ENCODE measurements at regions of chr11 and their contacts with region 1.

Region 1: DNA sequence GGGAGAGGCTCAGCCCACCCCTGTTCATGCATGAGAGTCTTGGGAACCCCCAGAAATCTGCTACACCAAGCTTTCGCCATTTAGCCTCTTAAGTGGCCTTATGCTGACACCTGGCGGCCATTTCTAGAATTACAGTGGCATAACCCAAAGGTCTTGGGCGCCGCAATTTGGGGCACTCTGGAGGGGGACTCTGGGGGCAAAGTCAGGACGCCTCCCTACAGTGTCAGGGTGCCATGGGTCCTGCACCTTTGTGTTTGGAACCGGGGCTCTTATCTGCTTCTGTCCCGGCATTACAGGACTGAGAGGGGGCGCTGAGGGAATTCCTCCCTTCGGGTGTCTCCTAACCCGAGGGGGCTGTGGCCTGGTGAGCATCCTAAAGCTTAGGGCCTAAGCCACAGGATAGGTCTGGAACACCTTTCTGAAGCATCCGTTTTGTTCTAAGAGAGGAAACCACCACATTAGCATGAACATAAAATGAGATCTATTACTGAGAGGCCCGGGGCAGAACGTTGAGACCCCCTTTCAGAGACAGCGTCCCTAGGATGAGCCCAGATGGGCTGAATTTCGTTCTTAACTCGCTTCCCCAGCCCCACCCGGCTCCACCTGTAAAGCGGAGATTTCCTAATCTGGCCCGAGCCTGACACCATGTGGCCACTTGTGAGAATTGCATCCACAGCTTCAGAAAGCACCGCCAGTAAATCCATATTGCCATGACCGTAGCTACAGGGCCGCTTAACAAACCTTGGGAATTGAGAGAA is 9.3 kb downstream of the INS start:
- DNase-seq: peak; percentile 57 to 90 (median 76)
- ATAC-seq: peak; percentile 70 to 86 (median 81)
- H3K4me3 ChIP-seq: peak overlapping the region in 1 of 2 donors; percentile 9
- H3K4me3 Mint-ChIP-seq: peak overlapping the region; percentile 17 to 64 (median 21)
- H3K27ac ChIP-seq: no peak overlapping the region
- H3K27ac Mint-ChIP-seq: no peak overlapping the region
- H3K4me1 ChIP-seq: peaks cover 0 to 15% of the 10 kb centered on the region in 2 experiments
- H3K4me1 Mint-ChIP-seq: peaks cover 5 to 9% (median 6%) of the 10 kb centered on the region in 3 donors
- H3K27me3 ChIP-seq: peaks cover 0 to 73% of the 10 kb centered on the region in 2 experiments
- H3K27me3 Mint-ChIP-seq: peaks cover 33 to 42% of the 10 kb centered on the region in 2 donors

Region 2: DNA sequence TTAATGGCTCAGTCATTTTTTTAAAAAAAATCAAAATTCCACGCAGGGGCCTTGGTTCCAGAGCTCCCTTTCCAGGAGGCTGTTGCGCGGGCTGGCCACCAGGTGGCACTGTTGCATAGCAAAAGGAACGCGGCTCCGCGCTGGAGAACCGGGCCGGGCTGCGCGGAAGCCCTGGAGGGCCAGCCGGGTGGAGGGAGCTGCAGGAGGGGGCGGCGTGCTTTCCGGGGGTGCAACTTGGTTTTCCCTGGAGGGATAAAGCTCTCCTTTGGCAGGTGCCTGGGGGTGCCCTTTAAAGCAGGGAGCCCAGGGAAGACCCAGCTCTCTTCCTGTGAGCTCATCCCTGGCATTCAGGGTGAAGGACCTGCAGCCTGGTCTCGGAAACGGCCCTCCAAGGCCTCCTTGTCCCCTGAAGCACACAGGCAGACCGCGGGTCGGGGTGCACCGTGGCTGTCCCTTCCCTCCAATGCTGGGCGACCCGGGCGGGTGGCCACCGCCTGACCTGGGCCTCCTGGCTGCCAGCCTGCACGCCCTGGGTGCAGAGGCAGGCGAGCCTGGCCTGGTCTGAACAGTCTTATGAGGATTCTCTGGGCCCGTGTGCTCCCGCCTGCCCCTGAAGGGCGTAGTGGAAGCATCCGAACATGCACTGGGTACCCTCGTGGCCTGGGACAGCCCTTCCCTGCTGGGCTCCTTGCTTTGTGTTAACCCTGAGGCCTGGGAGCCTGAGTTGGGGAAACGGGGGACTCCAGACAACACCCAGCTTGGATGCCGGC is 498.7 kb before region 1 on chr11:
- CTCF ChIA-PET with region 1: interaction called in 1 of 2 experiments, 25 read pairs
- POLR2A ChIA-PET with region 1: no interaction called
- DNase-seq: peak; percentile 34 to 84 (median 69)
- ATAC-seq: peak; percentile 84 to 92 (median 87)
- H3K4me3 ChIP-seq: no peak overlapping the region
- H3K4me3 Mint-ChIP-seq: no peak overlapping the region
- H3K27ac ChIP-seq: no peak overlapping the region
- H3K27ac Mint-ChIP-seq: no peak overlapping the region
- H3K4me1 ChIP-seq: peaks cover 0 to 4% of the 10 kb centered on the region in 2 experiments
- H3K4me1 Mint-ChIP-seq: no peaks in the 10 kb centered on the region
- H3K27me3 ChIP-seq: peaks cover 0 to 64% of the 10 kb centered on the region in 2 experiments
- H3K27me3 Mint-ChIP-seq: peaks cover 7 to 33% of the 10 kb centered on the region in 2 donors

Region 3: GRCh38 chr11:1694064-1694845 is 457.4 kb before region 1 on chr11:
- CTCF ChIA-PET with region 1: interaction called, 4 to 13 read pairs
- POLR2A ChIA-PET with region 1: no interaction called
- DNase-seq: peak; percentile 30 to 89 (median 69)
- ATAC-seq: peak; percentile 81 to 88 (median 85)
- H3K4me3 ChIP-seq: peak overlapping the region in 1 of 2 donors; percentile 34
- H3K4me3 Mint-ChIP-seq: peak overlapping the region in 1 of 3 donors; percentile 24
- H3K27ac ChIP-seq: no peak overlapping the region
- H3K27ac Mint-ChIP-seq: no peak overlapping the region
- H3K4me1 ChIP-seq: peaks cover 0 to 31% of the 10 kb centered on the region in 2 experiments
- H3K4me1 Mint-ChIP-seq: peaks cover 4 to 11% (median 9%) of the 10 kb centered on the region in 3 donors
- H3K27me3 ChIP-seq: peaks cover 0 to 68% of the 10 kb centered on the region in 2 experiments
- H3K27me3 Mint-ChIP-seq: peaks cover 8 to 40% of the 10 kb centered on the region in 2 donors

Region 4: GRCh38 chr11:1832211-1832919 is 319.3 kb before region 1 on chr11:
- CTCF ChIA-PET with region 1: interaction called, 5 to 12 read pairs
- POLR2A ChIA-PET with region 1: no interaction called
- DNase-seq: peak in 29 of 35 experiments; percentile 33 to 82 (median 61)
- ATAC-seq: peak; percentile 69 to 94 (median 74)
- H3K4me3 ChIP-seq: no peak overlapping the region
- H3K4me3 Mint-ChIP-seq: no peak overlapping the region
- H3K27ac ChIP-seq: no peak overlapping the region
- H3K27ac Mint-ChIP-seq: peak overlapping the region in 1 of 2 donors; percentile 52
- H3K4me1 ChIP-seq: peaks cover 0 to 10% of the 10 kb centered on the region in 2 experiments
- H3K4me1 Mint-ChIP-seq: peaks cover 0 to 2% (median 1%) of the 10 kb centered on the region in 3 donors
- H3K27me3 ChIP-seq: peaks cover 0 to 77% of the 10 kb centered on the region in 2 experiments
- H3K27me3 Mint-ChIP-seq: peaks cover 0 to 26% of the 10 kb centered on the region in 2 donors

Region 5: DNA sequence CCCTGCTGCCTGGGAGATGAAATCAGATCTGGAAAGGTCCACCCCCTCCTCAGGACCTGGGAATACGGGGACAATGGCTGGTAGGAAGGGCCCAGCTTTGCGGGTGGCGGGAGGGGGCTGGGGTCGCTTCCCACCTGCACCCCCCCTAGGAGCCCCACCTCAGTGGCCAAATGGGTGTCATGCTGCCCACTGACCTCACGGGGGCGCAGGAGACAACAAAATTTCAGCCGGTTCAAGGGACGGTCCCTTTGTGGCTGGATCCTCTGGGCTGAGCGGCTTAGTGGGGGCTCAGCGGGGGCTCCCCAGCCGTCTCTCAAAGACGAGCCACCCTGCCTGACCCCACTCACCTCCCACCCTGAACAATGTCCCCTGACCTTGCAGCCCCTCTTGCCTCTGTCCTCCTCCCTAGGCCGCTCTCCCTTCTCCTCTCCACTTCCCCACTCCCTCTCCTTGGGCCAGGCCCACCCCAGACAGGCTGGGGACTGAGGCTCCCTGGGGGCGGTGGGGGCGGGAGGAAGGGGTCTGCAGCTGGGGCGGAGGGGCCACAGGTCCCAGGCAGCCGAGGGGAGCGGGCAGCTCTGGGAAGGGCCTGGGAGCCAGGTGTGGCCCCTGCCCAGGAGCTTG is 114.7 kb before region 1 on chr11:
- CTCF ChIA-PET with region 1: interaction called, 16 to 41 read pairs
- POLR2A ChIA-PET with region 1: no interaction called
- DNase-seq: no peak
- ATAC-seq: peak; percentile 44 to 63 (median 53)
- H3K4me3 ChIP-seq: no peak overlapping the region
- H3K4me3 Mint-ChIP-seq: no peak overlapping the region
- H3K27ac ChIP-seq: no peak overlapping the region
- H3K27ac Mint-ChIP-seq: no peak overlapping the region
- H3K4me1 ChIP-seq: no peaks in the 10 kb centered on the region
- H3K4me1 Mint-ChIP-seq: no peaks in the 10 kb centered on the region
- H3K27me3 ChIP-seq: no peaks in the 10 kb centered on the region
- H3K27me3 Mint-ChIP-seq: no peaks in the 10 kb centered on the region

Region 6: DNA sequence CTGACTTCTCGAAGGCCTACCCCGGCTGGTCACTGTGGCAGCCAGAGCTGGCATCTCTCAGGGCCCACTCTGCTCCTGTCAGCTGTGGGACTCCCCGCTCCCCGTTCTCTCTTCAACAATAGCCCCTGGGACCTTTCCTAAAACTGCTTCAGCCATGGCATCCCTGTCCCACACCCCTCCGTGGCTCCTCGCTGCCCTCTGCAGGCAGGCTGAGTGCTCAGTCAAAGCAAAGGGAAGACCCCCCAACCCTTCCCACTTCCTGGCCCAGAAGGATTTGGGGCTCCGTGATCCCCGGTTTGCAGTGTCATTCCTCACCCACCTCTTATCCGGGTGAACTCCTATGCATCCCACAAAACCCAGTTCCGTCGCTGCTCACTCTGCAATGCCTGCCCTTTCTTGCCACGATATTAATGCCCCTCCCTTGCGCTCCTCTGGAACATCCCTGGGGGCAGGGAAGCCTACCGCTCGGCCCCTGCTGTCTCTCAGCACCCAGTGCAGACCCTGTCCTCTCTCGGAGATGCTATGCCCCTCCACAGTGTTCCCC is 21.5 kb after region 1 on chr11:
- CTCF ChIA-PET with region 1: no interaction called
- POLR2A ChIA-PET with region 1: no interaction called
- DNase-seq: no peak
- ATAC-seq: no peak
- H3K4me3 ChIP-seq: no peak overlapping the region
- H3K4me3 Mint-ChIP-seq: no peak overlapping the region
- H3K27ac ChIP-seq: no peak overlapping the region
- H3K27ac Mint-ChIP-seq: no peak overlapping the region
- H3K4me1 ChIP-seq: no peaks in the 10 kb centered on the region
- H3K4me1 Mint-ChIP-seq: no peaks in the 10 kb centered on the region
- H3K27me3 ChIP-seq: peaks cover 0 to 10% of the 10 kb centered on the region in 2 experiments
- H3K27me3 Mint-ChIP-seq: peaks cover 0 to 2% of the 10 kb centered on the region in 2 donors

Region 7: GRCh38 chr11:2348986-2349385 is 197.3 kb after region 1 on chr11:
- CTCF ChIA-PET with region 1: no interaction called
- POLR2A ChIA-PET with region 1: no interaction called
- DNase-seq: no peak
- ATAC-seq: no peak
- H3K4me3 ChIP-seq: no peak overlapping the region
- H3K4me3 Mint-ChIP-seq: no peak overlapping the region
- H3K27ac ChIP-seq: no peak overlapping the region
- H3K27ac Mint-ChIP-seq: no peak overlapping the region
- H3K4me1 ChIP-seq: no peaks in the 10 kb centered on the region
- H3K4me1 Mint-ChIP-seq: no peaks in the 10 kb centered on the region
- H3K27me3 ChIP-seq: no peaks in the 10 kb centered on the region
- H3K27me3 Mint-ChIP-seq: no peaks in the 10 kb centered on the region

Region 8: GRCh38 chr11:3359092-3359824 is 1207.6 kb after region 1 on chr11:
- CTCF ChIA-PET with region 1: interaction called in 1 of 2 experiments, 10 read pairs
- POLR2A ChIA-PET with region 1: no interaction called
- DNase-seq: no peak
- ATAC-seq: no peak
- H3K4me3 ChIP-seq: peak overlapping the region in 1 of 2 donors; percentile 32
- H3K4me3 Mint-ChIP-seq: no peak overlapping the region
- H3K27ac ChIP-seq: no peak overlapping the region
- H3K27ac Mint-ChIP-seq: no peak overlapping the region
- H3K4me1 ChIP-seq: no peaks in the 10 kb centered on the region
- H3K4me1 Mint-ChIP-seq: peaks cover 0 to 4% (median 3%) of the 10 kb centered on the region in 3 donors
- H3K27me3 ChIP-seq: no peaks in the 10 kb centered on the region
- H3K27me3 Mint-ChIP-seq: no peaks in the 10 kb centered on the region

Measured in T-cell (primary cell).